ENCODE measurements at regions of chr7 and their contacts with region 1.

Region 1: GRCh38 chr7:111474723-111475418 is 87.4 kb downstream of the IMMP2L start:
- DNase-seq: peak; percentile 77 to 94 (median 88)
- ATAC-seq: peak; percentile 78
- H3K4me3 ChIP-seq: no peak overlapping the region
- H3K27ac ChIP-seq: peak overlapping the region; percentile 68
- H3K4me1 ChIP-seq: peaks cover 6 to 47% of the 10 kb centered on the region in 2 experiments; a peak in 4 of 5 replicates
- H3K27me3 ChIP-seq: no peaks in the 10 kb centered on the region
- CTCF ChIP-seq: no peak
- EP300 ChIP-seq: peak; percentile 99
- POLR2A ChIP-seq: no peak
- RAD21 ChIP-seq: 0 out of 4 replicates have a peak, but pooled peaks of 1 of the 2 experiments have one; percentile 14

Region 2: GRCh38 chr7:111089822-111090426 is 384.9 kb before region 1 on chr7:
- CTCF ChIA-PET with region 1: no interaction called
- POLR2A ChIA-PET with region 1: no interaction called
- in situ Hi-C with region 1: loop called (anchors 5 kb)
- intact Hi-C with region 1: no loop called
- DNase-seq: peak; percentile 66 to 72 (median 69)
- ATAC-seq: peak; percentile 83
- H3K4me3 ChIP-seq: no peak overlapping the region
- H3K27ac ChIP-seq: no peak overlapping the region
- H3K4me1 ChIP-seq: no peaks in the 10 kb centered on the region; a peak in 1 of 5 replicates
- H3K27me3 ChIP-seq: no peaks in the 10 kb centered on the region
- CTCF ChIP-seq: peak; percentile 54 to 80 (median 62)
- EP300 ChIP-seq: no peak
- POLR2A ChIP-seq: no peak
- RAD21 ChIP-seq: peak; percentile 67 to 77

Region 3: DNA sequence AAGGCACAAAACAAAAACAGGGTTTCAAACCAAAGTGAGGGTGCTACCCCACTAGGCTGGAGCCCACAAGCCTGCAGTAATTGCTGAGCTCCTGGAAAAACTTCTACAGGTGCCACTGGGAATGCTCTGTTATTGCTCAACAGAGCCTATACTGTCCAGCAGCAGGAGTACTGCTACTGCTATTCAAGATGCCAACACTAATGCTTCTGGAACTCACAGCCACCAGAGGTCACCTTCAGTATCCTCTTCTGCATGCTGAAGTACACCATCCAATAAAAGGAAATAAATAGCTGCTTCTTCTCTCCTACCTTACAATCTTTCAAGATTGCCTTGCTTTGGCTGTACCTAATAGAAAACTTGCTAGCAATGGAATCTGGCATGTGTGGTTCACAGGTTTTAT is 161.9 kb before region 1 on chr7:
- CTCF ChIA-PET with region 1: no interaction called
- POLR2A ChIA-PET with region 1: interaction called, 5 read pairs
- in situ Hi-C with region 1: no loop called
- intact Hi-C with region 1: loop called (anchors 5 kb)
- DNase-seq: peak in 1 of 4 experiments; percentile 23
- ATAC-seq: peak; percentile 82
- H3K4me3 ChIP-seq: no peak overlapping the region
- H3K27ac ChIP-seq: no peak overlapping the region
- H3K4me1 ChIP-seq: peaks cover 0 to 9% of the 10 kb centered on the region in 2 experiments; a peak in 2 of 5 replicates
- H3K27me3 ChIP-seq: no peaks in the 10 kb centered on the region
- CTCF ChIP-seq: peak in 2 of 3 experiments; percentile 14 to 25; a peak in 2 of 6 replicates
- EP300 ChIP-seq: no peak
- POLR2A ChIP-seq: no peak
- RAD21 ChIP-seq: no peak; a peak in 1 of 4 replicates

Region 4: DNA sequence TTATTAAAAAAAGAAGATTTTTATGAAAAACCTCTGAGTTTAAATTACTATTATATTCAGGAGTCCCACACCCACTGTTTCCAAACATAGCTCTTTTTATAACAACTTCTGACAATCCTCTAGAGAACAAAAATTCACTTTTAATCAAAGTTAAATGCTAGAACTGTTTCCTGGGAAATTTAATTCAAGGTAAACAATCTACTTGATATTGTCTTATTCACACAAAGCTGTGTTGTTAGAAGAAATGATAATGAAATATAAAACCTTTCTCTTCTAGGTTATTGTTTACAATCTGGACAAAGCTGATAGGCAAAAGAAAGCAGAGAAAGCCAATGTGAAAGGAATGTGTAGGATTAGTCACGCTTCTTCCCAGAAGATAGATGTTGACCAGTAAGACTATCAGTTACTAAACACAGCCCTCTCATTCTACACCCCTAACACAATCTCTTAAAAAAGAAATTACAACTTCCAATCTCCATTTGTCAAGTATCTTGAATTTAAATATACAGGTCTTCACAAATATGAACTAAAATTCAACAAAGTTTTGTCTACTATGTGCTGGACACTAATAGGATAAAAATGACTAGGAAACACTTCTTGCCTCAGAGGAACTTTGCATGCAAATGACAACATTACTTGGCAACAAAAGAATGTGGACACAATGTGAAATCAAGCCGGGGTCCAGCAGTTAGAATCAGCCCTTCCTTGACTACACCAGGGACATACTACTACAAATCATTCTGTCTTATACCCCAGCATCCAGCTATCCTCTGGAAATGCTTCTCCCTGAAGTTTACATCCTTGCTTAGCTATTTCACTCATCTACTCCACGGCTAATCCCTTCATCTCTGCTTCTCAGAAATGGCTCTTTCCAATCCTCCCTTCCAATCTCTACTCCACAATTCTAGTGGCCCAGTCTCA is 36.2 kb before region 1 on chr7:
- CTCF ChIA-PET with region 1: no interaction called
- POLR2A ChIA-PET with region 1: interaction called, 3 read pairs
- in situ Hi-C with region 1: no loop called
- intact Hi-C with region 1: loop called (anchors 1 kb)
- DNase-seq: peak; percentile 87 to 94 (median 92)
- ATAC-seq: peak; percentile 97
- H3K4me3 ChIP-seq: no peak overlapping the region
- H3K27ac ChIP-seq: peak overlapping the region; percentile 77
- H3K4me1 ChIP-seq: peaks cover 0 to 27% of the 10 kb centered on the region in 2 experiments; a peak in 2 of 5 replicates
- H3K27me3 ChIP-seq: no peaks in the 10 kb centered on the region
- CTCF ChIP-seq: no peak
- EP300 ChIP-seq: peak; percentile 99
- POLR2A ChIP-seq: no peak
- RAD21 ChIP-seq: no peak

Region 5: GRCh38 chr7:111772716-111773115 is 297.8 kb after region 1 on chr7:
- CTCF ChIA-PET with region 1: no interaction called
- POLR2A ChIA-PET with region 1: interaction called, 3 read pairs
- in situ Hi-C with region 1: no loop called
- intact Hi-C with region 1: loop called (anchors 1 kb)
- DNase-seq: no peak
- ATAC-seq: no peak
- H3K4me3 ChIP-seq: no peak overlapping the region
- H3K27ac ChIP-seq: no peak overlapping the region
- H3K4me1 ChIP-seq: no peaks in the 10 kb centered on the region
- H3K27me3 ChIP-seq: 0 out of 5 replicates have a peak, but pooled peaks cover 0 to 4% of the 10 kb centered on the region in 2 experiments
- CTCF ChIP-seq: no peak
- EP300 ChIP-seq: no peak
- POLR2A ChIP-seq: no peak
- RAD21 ChIP-seq: no peak